ENCODE measurements at regions of chr12 and their contacts with region 1.

Region 1: DNA sequence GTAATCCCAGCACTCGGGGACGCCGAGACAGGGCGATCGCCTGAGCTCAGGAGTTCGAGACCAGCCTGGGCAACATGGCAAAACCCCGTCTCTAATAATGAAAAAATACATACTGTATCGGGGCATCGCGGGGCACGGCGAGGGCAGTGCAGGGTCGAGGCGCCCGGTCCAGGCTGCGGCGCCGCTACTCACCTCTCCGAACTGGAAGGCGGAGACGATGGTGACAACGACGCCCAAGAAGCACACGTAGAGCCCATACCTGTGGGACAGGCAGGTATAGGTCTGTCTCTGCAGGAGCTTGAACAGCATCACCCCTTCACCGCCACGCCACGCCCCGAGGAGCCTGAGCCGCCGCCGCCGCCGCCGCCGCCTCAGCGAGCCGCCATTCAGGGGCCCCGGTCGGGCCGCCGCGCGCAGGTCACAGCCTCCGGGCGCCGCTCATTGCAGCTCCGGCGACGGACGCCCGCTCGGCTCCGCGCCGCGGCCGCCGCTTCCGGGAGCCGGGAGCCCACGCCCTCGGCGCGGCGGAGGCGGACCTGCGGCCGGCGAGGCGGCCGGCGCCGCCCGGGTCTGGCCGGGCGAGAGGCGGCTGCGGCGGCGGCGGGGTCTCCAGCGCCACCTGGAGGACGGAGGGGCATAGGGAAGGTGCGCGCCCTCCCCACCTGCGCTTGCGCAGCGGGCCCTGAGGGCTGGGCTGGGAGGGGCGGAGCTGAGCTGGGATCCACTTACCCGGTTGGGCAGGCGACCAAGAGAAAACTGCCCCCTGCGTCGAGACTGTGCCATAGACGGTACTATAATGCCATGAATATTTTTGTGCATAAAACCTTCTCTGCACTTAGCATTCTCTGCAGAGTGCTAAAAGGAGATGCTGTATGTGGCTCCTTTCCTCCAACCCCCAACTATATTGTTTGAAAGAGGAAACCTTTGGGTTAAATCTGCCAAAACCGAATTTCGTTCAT is at the start of gene GNPTAB:
- DNase-seq: peak; percentile 80 to 93
- H3K4me3 ChIP-seq: peak within 1 kb of the TSS; percentile 66 to 88 (median 76)
- H3K27ac ChIP-seq: peak within 1 kb of the TSS; percentile 76 to 89
- H3K4me1 ChIP-seq: no peaks in the 10 kb centered on the region
- H3K27me3 ChIP-seq: no peaks in the 10 kb centered on the region
- CTCF ChIP-seq: peak; percentile 49 to 88 (median 67)
- POLR2A ChIP-seq: no peak
- total RNA-seq, gene GNPTAB: 37.4 to 59.0 (median 39.7) TPM

Region 2: DNA sequence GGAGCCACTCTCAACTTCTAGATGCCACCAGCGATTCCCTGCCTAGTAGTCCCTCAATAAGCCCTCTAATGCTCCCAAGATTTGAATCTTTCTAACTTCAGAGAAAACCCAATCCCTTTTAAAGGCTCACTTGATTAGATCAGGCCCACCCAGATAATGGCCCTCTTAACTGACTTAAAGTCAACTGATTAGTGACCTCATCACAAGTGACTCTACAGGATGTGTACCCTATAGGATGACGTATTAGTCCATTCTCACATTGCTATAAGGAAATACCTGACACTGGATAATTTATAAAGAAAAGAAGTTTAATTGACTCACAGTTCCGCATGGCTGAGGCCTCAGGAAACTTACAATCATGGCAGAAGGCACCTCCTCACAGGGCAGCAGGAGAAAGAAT is 1895.0 kb before region 1 on chr12:
- intact Hi-C with region 1: loop called (anchors 10 kb)
- DNase-seq: no peak
- H3K4me3 ChIP-seq: no peak overlapping the region
- H3K27ac ChIP-seq: no peak overlapping the region
- H3K4me1 ChIP-seq: no peaks in the 10 kb centered on the region
- H3K27me3 ChIP-seq: no peaks in the 10 kb centered on the region
- CTCF ChIP-seq: no peak
- POLR2A ChIP-seq: no peak

Region 3: DNA sequence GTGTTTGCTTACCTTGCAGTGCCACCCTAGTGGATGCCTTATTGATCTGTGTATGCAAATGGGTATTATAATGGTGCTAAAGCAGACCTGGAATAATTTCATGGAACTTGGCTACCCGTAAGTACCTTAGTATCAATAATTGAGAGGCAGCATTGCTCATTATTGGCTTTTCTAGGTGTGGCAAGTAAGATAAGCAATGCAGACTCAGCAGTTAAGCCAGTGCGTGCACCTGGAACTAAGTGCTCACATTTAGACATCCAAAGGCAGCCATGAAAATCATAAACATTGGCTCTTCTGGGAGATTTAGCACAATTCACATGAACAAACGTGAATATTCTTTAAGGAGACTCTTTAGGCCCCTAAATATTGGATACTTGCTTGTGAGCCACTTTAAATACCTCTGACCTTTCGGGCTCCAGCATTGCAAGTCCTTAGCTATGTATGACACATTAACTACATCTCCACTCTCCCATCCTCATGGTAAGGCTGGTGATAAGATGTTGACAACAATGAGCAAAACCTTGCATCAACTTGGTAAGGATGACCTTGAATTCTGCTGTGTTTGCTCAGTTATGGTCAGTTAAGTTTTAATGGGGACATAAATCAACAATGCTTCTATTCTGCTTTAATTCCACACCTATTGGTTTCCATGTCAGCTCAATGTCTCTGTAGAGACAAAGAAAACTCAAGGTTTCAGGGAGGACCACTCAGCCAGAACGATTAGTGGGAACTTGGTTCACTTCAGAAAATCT is 732.6 kb before region 1 on chr12:
- intact Hi-C with region 1: loop called (anchors 5 kb)
- DNase-seq: no peak
- H3K4me3 ChIP-seq: no peak overlapping the region
- H3K27ac ChIP-seq: no peak overlapping the region
- H3K4me1 ChIP-seq: no peaks in the 10 kb centered on the region
- H3K27me3 ChIP-seq: no peaks in the 10 kb centered on the region
- CTCF ChIP-seq: no peak
- POLR2A ChIP-seq: no peak

Region 4: GRCh38 chr12:101733166-101733565 is 97.5 kb before region 1 on chr12:
- intact Hi-C with region 1: no loop called
- DNase-seq: no peak
- H3K4me3 ChIP-seq: no peak overlapping the region
- H3K27ac ChIP-seq: no peak overlapping the region
- H3K4me1 ChIP-seq: no peaks in the 10 kb centered on the region
- H3K27me3 ChIP-seq: no peaks in the 10 kb centered on the region
- CTCF ChIP-seq: no peak
- POLR2A ChIP-seq: no peak

Region 5: DNA sequence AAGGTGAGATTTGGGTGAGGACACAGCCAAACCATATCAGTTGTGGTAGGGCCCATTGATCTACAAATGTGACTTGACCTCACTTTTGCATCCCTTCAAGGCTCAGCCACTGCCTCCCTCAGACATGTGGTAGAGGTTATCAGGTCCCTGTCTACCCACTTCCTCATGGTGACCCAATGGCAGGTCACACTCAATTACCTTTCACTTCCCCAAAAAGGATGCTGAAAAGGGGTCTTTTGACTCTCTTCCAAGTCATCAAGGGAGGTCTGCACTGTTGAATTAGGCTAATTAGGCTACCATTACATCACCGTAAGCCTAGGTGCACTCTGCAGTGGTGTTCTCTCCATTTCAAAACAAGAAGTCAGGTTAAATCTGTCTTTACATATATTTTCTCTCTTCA is 24.1 kb after region 1 on chr12:
- intact Hi-C with region 1: no loop called
- DNase-seq: no peak
- H3K4me3 ChIP-seq: no peak overlapping the region
- H3K27ac ChIP-seq: no peak overlapping the region
- H3K4me1 ChIP-seq: no peaks in the 10 kb centered on the region
- H3K27me3 ChIP-seq: no peaks in the 10 kb centered on the region
- CTCF ChIP-seq: no peak
- POLR2A ChIP-seq: no peak

Region 6: GRCh38 chr12:102023343-102023930 is 192.8 kb after region 1 on chr12:
- intact Hi-C with region 1: no loop called
- DNase-seq: no peak
- H3K4me3 ChIP-seq: no peak overlapping the region
- H3K27ac ChIP-seq: no peak overlapping the region
- H3K4me1 ChIP-seq: no peaks in the 10 kb centered on the region
- H3K27me3 ChIP-seq: no peaks in the 10 kb centered on the region
- CTCF ChIP-seq: no peak
- POLR2A ChIP-seq: no peak